Activated T-helper 1 cell treated with anti-CD3 and anti-CD28 coated beads, Interleukin-12 subunit alpha, Interleukin-12 subunit beta, Interleukin-2, Interleukin-4 antibody, amounts not matched to agents 30 ng/mL and 10 ng/mL and 1 ng/mL, durations not matched to agents 14 hours and 24 hours and 36 hours (primary cell): ENCODE measurements at regions of chr7 and their contacts with region 1.

Region 1: DNA sequence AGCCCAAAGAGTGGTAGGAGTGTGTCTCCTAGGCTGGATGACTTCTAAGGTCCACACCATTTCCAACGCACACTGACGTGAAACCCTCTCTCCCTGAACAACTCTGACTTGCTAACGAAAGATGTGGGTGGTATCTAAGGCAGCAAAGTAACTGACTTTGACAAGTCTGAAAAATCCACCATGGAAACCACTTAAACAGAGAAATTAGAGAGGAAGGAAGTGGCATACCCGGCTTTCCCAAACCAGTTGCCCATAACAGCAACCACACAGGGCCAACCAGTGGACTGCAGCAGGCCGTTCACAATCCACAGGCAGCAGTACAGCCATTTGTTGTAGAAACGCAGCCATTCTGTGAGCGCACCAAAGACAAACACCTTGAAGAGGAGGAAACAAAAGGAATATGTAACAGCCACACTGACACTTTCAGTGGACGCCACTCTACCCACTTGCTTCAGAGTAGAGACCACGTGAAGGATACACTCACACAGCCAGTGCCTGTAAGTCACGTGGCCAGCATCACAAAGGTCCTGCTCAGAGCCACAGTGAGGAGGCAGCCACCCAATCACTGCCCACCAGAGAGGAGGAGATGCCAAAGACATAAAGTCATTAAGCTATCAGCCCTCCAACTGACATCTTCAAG is 39.8 kb downstream of the SLC37A3 start:
- DNase-seq: peak; percentile 9
- H3K4me3 Mint-ChIP-seq: peak overlapping the region; percentile 63
- H3K27ac Mint-ChIP-seq: peak overlapping the region; percentile 98
- H3K4me1 Mint-ChIP-seq: peaks cover 30% of the 10 kb centered on the region
- H3K27me3 Mint-ChIP-seq: no peaks in the 10 kb centered on the region

Region 2: GRCh38 chr7:140390466-140391190 is 32.1 kb after region 1 on chr7:
- intact Hi-C with region 1: loop called (anchors 2 kb)
- DNase-seq: no peak
- H3K4me3 Mint-ChIP-seq: no peak overlapping the region
- H3K27ac Mint-ChIP-seq: no peak overlapping the region
- H3K4me1 Mint-ChIP-seq: peaks cover 2% of the 10 kb centered on the region
- H3K27me3 Mint-ChIP-seq: no peaks in the 10 kb centered on the region

Region 3: GRCh38 chr7:140439359-140439758 is 80.8 kb after region 1 on chr7:
- intact Hi-C with region 1: loop called (anchors 2 kb)
- DNase-seq: no peak
- H3K4me3 Mint-ChIP-seq: no peak overlapping the region
- H3K27ac Mint-ChIP-seq: peak overlapping the region; percentile 58
- H3K4me1 Mint-ChIP-seq: peaks cover 13% of the 10 kb centered on the region
- H3K27me3 Mint-ChIP-seq: peaks cover 4% of the 10 kb centered on the region